ENCODE measurements at regions of chr2 and their contacts with region 1.

Region 1: DNA sequence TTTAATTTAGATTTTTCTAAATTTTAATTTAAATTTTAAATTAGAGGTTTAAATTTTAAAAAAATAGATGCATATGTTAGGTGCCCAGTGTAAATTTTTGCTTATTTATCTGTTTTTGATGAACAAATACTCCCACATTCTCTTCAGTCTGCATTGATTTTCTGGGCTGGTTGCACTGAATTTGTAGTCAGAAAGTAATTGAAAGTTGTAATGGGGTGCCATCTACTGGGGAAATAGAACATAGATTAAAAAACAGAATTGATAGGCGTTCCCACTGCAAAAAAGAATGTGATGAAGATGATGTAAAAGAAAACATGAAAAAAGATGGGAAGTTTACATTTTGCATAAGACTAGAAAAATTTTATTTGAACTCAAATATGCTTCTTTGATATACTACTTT is 51.7 kb upstream of the CCDC85A start:
- DNase-seq: no peak
- H3K4me3 Mint-ChIP-seq: no peak overlapping the region
- H3K27ac Mint-ChIP-seq: no peak overlapping the region
- H3K4me1 Mint-ChIP-seq: peaks cover 8% of the 10 kb centered on the region
- H3K27me3 Mint-ChIP-seq: no peaks in the 10 kb centered on the region
- CTCF ChIP-seq: no peak

Region 2: DNA sequence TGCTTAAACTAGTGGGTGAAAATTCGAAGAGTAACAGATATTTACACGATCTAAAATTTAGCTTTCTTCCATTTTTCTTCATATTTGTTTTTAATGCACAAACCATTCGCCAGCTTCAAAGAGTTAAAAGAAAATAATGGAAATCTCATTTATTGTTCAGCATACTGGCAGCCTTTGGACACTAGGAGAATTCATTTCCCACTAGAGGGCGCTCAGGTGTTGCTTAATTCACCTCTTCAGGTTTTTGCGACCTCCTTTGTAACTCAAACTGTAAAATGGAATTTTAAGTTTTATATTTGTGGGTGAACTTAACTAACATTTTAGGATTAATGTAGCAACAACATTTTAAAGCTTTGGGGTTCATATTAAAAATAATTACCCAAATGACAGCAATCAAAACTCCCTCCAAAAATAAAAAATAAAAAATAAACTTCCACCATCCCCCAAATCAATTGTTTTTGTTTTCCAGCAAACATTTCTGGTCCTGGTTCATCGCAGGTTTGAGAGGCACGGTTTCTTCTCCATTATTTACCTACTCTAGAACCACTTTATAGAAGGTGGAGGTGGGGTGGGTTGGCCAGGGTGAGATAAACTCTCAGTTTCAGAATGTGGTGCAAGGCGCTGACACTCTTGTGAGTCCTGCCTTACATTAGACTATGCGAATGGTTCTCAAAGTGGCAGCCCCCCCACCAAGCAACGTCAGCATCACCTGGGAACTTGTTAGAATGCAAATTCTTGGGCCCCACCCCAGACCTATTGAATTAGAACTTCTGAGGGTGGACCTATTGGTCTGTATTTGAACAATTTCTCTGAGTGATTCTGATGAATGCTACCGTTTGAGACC is 413.8 kb before region 1 on chr2:
- CTCF ChIA-PET with region 1: interaction called, 3 read pairs
- intact Hi-C with region 1: loop called (anchors 2 kb)
- DNase-seq: peak; percentile 75
- H3K4me3 Mint-ChIP-seq: no peak overlapping the region
- H3K27ac Mint-ChIP-seq: no peak overlapping the region
- H3K4me1 Mint-ChIP-seq: no peaks in the 10 kb centered on the region
- H3K27me3 Mint-ChIP-seq: no peaks in the 10 kb centered on the region
- CTCF ChIP-seq: no peak

Region 3: GRCh38 chr2:55848096-55848495 is 284.0 kb before region 1 on chr2:
- CTCF ChIA-PET with region 1: no interaction called
- intact Hi-C with region 1: no loop called
- DNase-seq: no peak
- H3K4me3 Mint-ChIP-seq: no peak overlapping the region
- H3K27ac Mint-ChIP-seq: no peak overlapping the region
- H3K4me1 Mint-ChIP-seq: peaks cover 9% of the 10 kb centered on the region
- H3K27me3 Mint-ChIP-seq: no peaks in the 10 kb centered on the region
- CTCF ChIP-seq: no peak

Region 4: GRCh38 chr2:56009758-56010458 is 122.2 kb before region 1 on chr2:
- CTCF ChIA-PET with region 1: no interaction called
- intact Hi-C with region 1: loop called (anchors 10 kb)
- DNase-seq: no peak
- H3K4me3 Mint-ChIP-seq: no peak overlapping the region
- H3K27ac Mint-ChIP-seq: no peak overlapping the region
- H3K4me1 Mint-ChIP-seq: no peaks in the 10 kb centered on the region
- H3K27me3 Mint-ChIP-seq: no peaks in the 10 kb centered on the region
- CTCF ChIP-seq: peak; percentile 26

Region 5: DNA sequence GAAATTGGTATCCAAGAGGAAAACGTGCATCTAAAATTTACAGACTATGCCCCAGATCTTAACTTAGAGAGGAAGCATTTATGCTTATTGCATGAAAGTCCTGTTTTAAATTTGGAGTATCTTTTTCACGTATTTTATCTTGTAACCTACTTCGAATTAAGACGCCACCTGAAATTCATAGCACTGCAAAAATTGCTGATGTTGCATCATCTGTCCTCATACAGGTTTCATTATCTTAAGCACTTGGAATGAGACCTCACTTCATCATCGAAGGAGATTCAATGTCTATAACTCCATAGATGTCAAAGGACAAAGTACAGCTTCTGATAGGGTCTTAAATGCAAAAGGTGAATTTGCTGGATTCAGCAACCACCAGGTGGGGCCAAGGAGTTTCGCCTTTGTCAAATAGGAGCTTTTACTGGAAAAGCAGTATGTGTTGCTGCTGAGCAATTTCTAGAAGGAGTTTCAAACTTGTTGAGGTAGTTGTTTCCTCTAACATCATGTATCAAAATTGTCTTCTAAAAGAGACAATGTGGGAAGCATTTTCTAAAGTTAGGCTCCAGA is 54.7 kb before region 1 on chr2:
- CTCF ChIA-PET with region 1: interaction called, 7 read pairs
- intact Hi-C with region 1: loop called (anchors 1 kb)
- DNase-seq: peak; percentile 53
- H3K4me3 Mint-ChIP-seq: no peak overlapping the region
- H3K27ac Mint-ChIP-seq: no peak overlapping the region
- H3K4me1 Mint-ChIP-seq: no peaks in the 10 kb centered on the region
- H3K27me3 Mint-ChIP-seq: peaks cover 18% of the 10 kb centered on the region
- CTCF ChIP-seq: peak; percentile 54

Region 6: GRCh38 chr2:56118474-56118873 is 13.7 kb before region 1 on chr2:
- CTCF ChIA-PET with region 1: no interaction called
- intact Hi-C with region 1: loop called (anchors 1 kb)
- DNase-seq: no peak
- H3K4me3 Mint-ChIP-seq: no peak overlapping the region
- H3K27ac Mint-ChIP-seq: no peak overlapping the region
- H3K4me1 Mint-ChIP-seq: no peaks in the 10 kb centered on the region
- H3K27me3 Mint-ChIP-seq: no peaks in the 10 kb centered on the region
- CTCF ChIP-seq: no peak

Measured in Calu3 (cell line).